Activated naive CD4-positive, alpha-beta T cell treated with anti-CD3 and anti-CD28 coated beads for 36 hours (primary cell): ENCODE measurements at regions of chr1 and their contacts with region 1.

Region 1: GRCh38 chr1:32870615-32871363 is at the start of gene FNDC5:
- DNase-seq: no peak
- H3K4me3 Mint-ChIP-seq: peak within 1 kb of the TSS; percentile 35
- H3K27ac Mint-ChIP-seq: no peak within 1 kb of the TSS
- H3K4me1 Mint-ChIP-seq: peaks cover 6% of the 10 kb centered on the region
- H3K27me3 Mint-ChIP-seq: peaks cover 39% of the 10 kb centered on the region
- total RNA-seq, gene FNDC5: not detected

Region 2: GRCh38 chr1:32828341-32828740 is 42.4 kb before region 1 on chr1:
- CTCF ChIA-PET with region 1: interaction called, 5 read pairs
- intact Hi-C with region 1: loop called (anchors 1 kb)
- DNase-seq: no peak
- H3K4me3 Mint-ChIP-seq: no peak overlapping the region
- H3K27ac Mint-ChIP-seq: no peak overlapping the region
- H3K4me1 Mint-ChIP-seq: no peaks in the 10 kb centered on the region
- H3K27me3 Mint-ChIP-seq: no peaks in the 10 kb centered on the region

Region 3: GRCh38 chr1:33014464-33015163 is 143.8 kb after region 1 on chr1:
- CTCF ChIA-PET with region 1: no interaction called
- intact Hi-C with region 1: no loop called
- DNase-seq: no peak
- H3K4me3 Mint-ChIP-seq: no peak overlapping the region
- H3K27ac Mint-ChIP-seq: no peak overlapping the region
- H3K4me1 Mint-ChIP-seq: peaks cover 24% of the 10 kb centered on the region
- H3K27me3 Mint-ChIP-seq: no peaks in the 10 kb centered on the region